MCF 10A (cell line): ENCODE measurements at regions of chr6 and their contacts with region 1.

Region 1: GRCh38 chr6:51299621-51300380 is 481.1 kb downstream of the TFAP2B start:
- DNase-seq: peak; percentile 84
- H3K4me3 Mint-ChIP-seq: peak overlapping the region; percentile 20
- H3K27ac Mint-ChIP-seq: peak overlapping the region; percentile 92
- H3K4me1 Mint-ChIP-seq: peaks cover 19% of the 10 kb centered on the region
- H3K27me3 Mint-ChIP-seq: no peaks in the 10 kb centered on the region
- CTCF ChIP-seq: no peak

Region 2: DNA sequence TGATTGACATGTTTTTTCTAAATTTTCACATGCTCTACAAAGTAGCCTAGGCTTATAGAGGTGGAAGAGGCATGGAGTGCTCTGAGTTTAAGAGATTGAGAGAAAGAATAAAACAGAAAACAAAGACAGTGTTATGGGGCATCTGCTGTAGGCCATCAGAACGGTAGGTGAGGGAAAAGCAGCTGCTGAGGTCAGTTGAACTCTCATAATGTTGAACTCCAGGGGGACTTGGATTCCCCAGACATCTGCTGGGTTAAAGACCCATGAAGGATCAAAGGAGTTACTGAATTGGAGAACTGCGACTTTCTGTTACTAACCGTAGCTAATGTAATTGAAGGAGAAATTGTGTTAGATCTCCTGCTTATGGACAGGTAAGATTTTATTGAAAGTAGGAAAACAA is 147.2 kb before region 1 on chr6:
- CTCF ChIA-PET with region 1: no interaction called
- POLR2A ChIA-PET with region 1: no interaction called
- intact Hi-C with region 1: no loop called
- DNase-seq: no peak
- H3K4me3 Mint-ChIP-seq: no peak overlapping the region
- H3K27ac Mint-ChIP-seq: no peak overlapping the region
- H3K4me1 Mint-ChIP-seq: no peaks in the 10 kb centered on the region
- H3K27me3 Mint-ChIP-seq: no peaks in the 10 kb centered on the region
- CTCF ChIP-seq: no peak

Region 3: GRCh38 chr6:51241376-51241775 is 58.4 kb before region 1 on chr6:
- CTCF ChIA-PET with region 1: no interaction called
- POLR2A ChIA-PET with region 1: interaction called, 13 read pairs
- intact Hi-C with region 1: no loop called
- DNase-seq: no peak
- H3K4me3 Mint-ChIP-seq: no peak overlapping the region
- H3K27ac Mint-ChIP-seq: no peak overlapping the region
- H3K4me1 Mint-ChIP-seq: peaks cover 11% of the 10 kb centered on the region
- H3K27me3 Mint-ChIP-seq: no peaks in the 10 kb centered on the region
- CTCF ChIP-seq: no peak

Region 4: DNA sequence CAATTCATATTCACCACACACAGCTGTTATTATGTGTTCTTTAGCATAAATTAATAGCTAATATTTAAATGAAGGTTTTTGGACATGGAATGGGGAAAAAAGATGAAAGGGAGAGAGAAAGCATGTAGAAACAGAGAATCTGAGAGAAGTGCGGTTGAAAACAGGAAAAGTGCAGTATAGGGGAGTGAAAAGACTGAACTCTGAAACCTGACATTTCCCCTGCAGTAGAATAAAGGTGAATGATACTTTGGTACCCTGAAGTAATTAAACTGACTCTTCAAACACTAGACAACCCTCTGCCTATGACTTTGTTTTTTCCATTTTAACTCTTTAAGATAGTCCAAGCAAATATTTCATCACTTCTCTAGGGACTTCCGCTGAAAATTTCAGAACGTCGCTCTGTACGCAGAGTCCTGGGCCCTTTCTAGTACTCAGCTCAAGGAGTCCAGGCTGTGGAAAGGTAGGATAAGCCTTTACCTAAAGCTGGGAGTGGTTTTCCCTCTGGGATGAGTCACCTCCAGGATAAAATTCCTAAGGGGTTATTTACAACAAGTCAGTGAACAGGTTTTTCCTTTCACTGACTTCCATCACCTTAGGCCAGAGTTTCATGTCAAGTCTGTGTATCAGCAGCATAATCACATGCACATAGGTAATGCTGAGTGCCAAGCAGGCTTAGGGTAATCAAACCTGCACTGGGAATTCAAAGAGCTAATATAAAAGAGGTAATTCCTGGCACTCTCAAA is 173.1 kb after region 1 on chr6:
- CTCF ChIA-PET with region 1: interaction called, 3 read pairs
- POLR2A ChIA-PET with region 1: interaction called, 12 read pairs
- intact Hi-C with region 1: no loop called
- DNase-seq: peak; percentile 81
- H3K4me3 Mint-ChIP-seq: no peak overlapping the region
- H3K27ac Mint-ChIP-seq: peak overlapping the region; percentile 46
- H3K4me1 Mint-ChIP-seq: peaks cover 15% of the 10 kb centered on the region
- H3K27me3 Mint-ChIP-seq: no peaks in the 10 kb centered on the region
- CTCF ChIP-seq: no peak